Transverse colon (tissue), 4 donors: ENCODE measurements at regions of chr1 and their contacts with region 1.

Region 1: DNA sequence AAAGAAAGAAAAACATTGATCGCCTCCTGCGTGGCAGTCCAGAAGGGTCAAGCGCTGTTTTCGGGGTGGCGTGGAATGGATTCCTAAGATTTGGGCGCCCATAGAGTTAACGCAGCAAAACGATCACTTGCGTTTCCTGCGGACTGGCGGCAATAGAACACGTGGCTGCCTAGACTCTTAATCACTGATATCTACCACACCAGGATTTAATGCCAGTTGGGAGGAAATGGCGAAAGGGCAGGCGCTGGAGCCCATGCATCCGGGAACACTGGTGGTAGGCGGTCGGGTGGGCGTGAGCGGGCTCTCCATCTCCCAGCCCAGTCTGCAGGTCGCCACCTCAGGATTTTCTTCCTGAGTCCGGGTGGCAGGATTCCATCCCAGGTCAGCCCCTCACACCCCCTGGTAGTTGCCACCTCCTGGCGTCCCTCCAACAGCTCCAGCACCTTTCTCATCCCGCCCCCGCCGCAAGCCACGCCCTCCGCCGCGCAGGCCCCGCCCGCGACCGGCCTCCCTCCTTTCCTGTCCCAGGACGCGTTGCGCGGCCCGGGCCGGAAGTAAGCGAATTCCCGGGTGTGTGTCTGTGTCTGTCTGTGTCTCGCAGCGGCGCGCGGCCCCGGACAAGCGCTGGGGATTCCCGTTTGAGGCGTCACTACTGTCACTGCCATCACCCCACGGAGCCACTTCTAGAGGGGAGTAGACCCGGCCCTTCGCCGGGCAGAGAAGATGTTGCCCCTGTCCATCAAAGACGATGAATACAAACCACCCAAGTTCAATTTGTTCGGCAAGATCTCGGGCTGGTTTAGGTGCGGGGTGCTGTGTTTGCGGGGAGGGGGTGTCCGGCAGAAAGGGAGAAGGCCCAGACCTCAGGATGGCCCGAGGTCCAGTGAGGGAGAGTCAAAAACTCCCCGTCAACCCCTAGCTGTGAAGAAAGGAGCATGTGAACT is at the start of gene SLC30A7:
- DNase-seq: peak; percentile 98
- H3K4me3 ChIP-seq: peak within 1 kb of the TSS; percentile 55 to 80 (median 68)
- H3K27ac ChIP-seq: peak within 1 kb of the TSS; percentile 93 to 99 (median 96)
- H3K4me1 ChIP-seq: peaks cover 0 to 31% (median 20%) of the 10 kb centered on the region in 4 donors
- H3K27me3 ChIP-seq: no peaks in the 10 kb centered on the region
- CTCF ChIP-seq: no peak
- EP300 ChIP-seq: no peak
- POLR2A ChIP-seq: peak; percentile 90
- total RNA-seq, gene SLC30A7: 10.1 to 22.7 (median 17.5) TPM

Region 2: DNA sequence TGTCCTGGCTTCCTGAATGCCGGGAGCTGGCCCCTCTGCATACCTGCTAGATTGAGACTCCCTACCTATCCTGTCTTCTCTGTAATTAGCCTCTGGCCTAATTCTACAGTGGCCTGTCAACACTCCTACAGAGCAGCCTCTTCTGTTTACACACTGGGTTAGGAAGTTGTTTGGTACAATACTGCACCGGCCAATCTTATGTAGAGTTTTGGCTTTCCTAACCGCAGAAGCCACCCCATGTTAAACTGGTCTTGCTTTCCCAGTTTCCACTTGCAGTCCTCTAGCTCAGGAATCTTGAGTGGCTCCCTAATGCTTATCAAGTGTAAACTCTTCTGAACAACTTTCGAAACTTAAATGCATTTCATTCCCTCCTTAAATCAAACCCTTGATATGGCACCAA is 87.0 kb after region 1 on chr1:
- in situ Hi-C with region 1: no loop called
- intact Hi-C with region 1: loop called (anchors 1 kb)
- DNase-seq: no peak
- H3K4me3 ChIP-seq: no peak overlapping the region
- H3K27ac ChIP-seq: no peak overlapping the region
- H3K4me1 ChIP-seq: peaks cover 0 to 1% (median 0%) of the 10 kb centered on the region in 4 donors
- H3K27me3 ChIP-seq: no peaks in the 10 kb centered on the region
- CTCF ChIP-seq: no peak
- EP300 ChIP-seq: no peak
- POLR2A ChIP-seq: no peak